ENCODE measurements at regions of chr4 and their contacts with region 1.

Region 1: GRCh38 chr4:18593445-18594002 is 572.0 kb upstream of the LCORL start:
- DNase-seq: peak; percentile 47 to 64
- H3K4me3 ChIP-seq: no peak overlapping the region
- H3K4me1 ChIP-seq: no peaks in the 10 kb centered on the region
- H3K27me3 ChIP-seq: peaks cover 5% of the 10 kb centered on the region; the same call in 1 of the 2 replicates

Region 2: DNA sequence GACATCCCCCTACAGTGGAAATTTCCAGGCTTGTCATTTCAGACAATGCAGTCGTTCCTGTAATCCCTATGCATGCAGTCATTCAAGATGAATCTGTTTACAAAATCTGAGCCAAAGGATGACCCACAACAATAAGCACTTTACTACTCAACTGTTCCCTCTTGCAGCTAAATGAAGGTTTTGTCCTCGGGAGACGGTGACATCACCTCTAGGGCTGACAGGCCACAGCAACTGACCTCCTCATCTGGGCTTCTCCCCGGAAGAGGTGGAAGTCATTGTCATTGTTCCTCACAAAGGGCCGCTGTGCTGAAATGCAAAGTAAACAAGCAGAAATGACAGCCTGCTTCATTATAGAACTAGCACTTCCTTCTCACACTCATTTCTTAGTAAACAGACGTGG is 1049.3 kb before region 1 on chr4:
- in situ Hi-C with region 1: loop called (anchors 25 kb)
- DNase-seq: peak; percentile 25 to 56
- H3K4me3 ChIP-seq: no peak overlapping the region
- H3K4me1 ChIP-seq: peaks cover 5% of the 10 kb centered on the region
- H3K27me3 ChIP-seq: peaks cover 3% of the 10 kb centered on the region; the same call in 1 of the 2 replicates

Region 3: DNA sequence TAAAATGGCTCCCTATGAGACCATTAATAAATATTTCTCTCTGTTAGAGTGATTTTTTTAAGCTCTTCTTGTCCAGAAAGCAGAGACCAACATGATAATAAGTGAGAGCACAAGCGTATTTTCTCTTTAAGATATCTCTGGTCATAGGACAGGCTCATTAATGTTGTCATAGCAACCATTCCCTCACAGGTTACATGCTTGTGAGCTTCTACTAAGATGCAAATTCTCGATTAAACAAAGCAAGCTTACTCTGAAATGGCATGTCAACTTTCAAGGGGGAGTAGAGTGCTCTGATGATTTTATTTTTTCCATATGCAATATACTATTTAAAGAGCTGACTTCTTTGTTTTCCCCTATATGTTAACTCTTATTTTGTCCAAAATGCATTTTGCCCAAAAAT is 84.7 kb before region 1 on chr4:
- in situ Hi-C with region 1: no loop called
- DNase-seq: no peak
- H3K4me3 ChIP-seq: no peak overlapping the region
- H3K4me1 ChIP-seq: no peaks in the 10 kb centered on the region
- H3K27me3 ChIP-seq: no peaks in the 10 kb centered on the region

Measured in HAP-1 (cell line).